ENCODE measurements at regions of chr19 and their contacts with region 1.

Region 1: GRCh38 chr19:6963937-6964336 is 57.3 kb downstream of the MBD3L2B start:
- DNase-seq: peak; percentile 60
- H3K4me3 Mint-ChIP-seq: no peak overlapping the region
- H3K27ac Mint-ChIP-seq: no peak overlapping the region
- H3K4me1 Mint-ChIP-seq: no peaks in the 10 kb centered on the region
- H3K27me3 Mint-ChIP-seq: no peaks in the 10 kb centered on the region

Region 2: GRCh38 chr19:6976197-6976596 is 12.3 kb after region 1 on chr19:
- CTCF ChIA-PET with region 1: interaction called, 13 read pairs
- POLR2A ChIA-PET with region 1: no interaction called
- intact Hi-C with region 1: no loop called
- DNase-seq: no peak
- H3K4me3 Mint-ChIP-seq: no peak overlapping the region
- H3K27ac Mint-ChIP-seq: no peak overlapping the region
- H3K4me1 Mint-ChIP-seq: no peaks in the 10 kb centered on the region
- H3K27me3 Mint-ChIP-seq: no peaks in the 10 kb centered on the region

Region 3: GRCh38 chr19:6983448-6983847 is 19.5 kb after region 1 on chr19:
- CTCF ChIA-PET with region 1: interaction called, 11 read pairs
- POLR2A ChIA-PET with region 1: no interaction called
- intact Hi-C with region 1: no loop called
- DNase-seq: no peak
- H3K4me3 Mint-ChIP-seq: no peak overlapping the region
- H3K27ac Mint-ChIP-seq: no peak overlapping the region
- H3K4me1 Mint-ChIP-seq: no peaks in the 10 kb centered on the region
- H3K27me3 Mint-ChIP-seq: no peaks in the 10 kb centered on the region